ENCODE measurements at regions of chr3 and their contacts with region 1.

Region 1: DNA sequence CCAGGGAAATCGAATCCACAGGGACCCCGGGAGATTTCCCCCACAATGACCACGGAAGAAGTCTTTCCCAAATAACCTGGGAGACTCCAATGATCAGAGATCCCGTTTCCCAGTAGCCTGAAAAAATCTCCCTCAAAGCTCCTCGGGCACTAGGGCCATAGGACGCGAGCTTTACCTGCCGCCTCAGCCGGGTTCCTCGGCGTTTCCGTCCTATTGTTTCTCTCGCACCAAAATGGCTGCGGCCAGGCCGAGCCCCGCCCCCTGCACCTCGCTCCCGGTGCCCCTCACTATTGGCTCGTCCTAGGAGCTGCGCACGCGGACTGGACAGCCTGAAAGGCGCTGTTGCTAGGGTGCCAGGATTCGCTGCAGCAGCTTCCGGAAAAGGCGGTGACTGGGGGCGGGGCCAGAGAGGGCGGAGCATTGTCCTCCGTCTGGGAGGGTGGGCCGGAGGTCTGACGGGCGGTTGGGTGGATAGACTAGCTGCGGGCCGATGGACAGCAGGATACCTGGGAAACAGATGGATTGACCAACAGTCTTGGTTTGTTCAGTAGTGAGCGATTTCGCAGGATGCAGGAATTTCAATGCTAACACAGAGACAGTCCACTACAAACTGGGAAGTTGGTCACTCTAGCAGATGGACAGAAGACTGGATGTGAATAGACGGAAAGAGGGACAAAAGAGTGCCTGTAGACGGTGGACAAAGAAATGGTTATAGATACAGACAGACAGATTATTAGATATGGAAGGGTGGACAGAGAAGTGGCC is at the start of gene IP6K2:
- DNase-seq: peak; percentile 99
- H3K4me3 ChIP-seq: peak within 1 kb of the TSS; percentile 55
- H3K4me3 Mint-ChIP-seq: peak within 1 kb of the TSS; percentile 66
- H3K27ac Mint-ChIP-seq: peak within 1 kb of the TSS; percentile 88
- H3K4me1 ChIP-seq: peaks cover 41% of the 10 kb centered on the region
- H3K4me1 Mint-ChIP-seq: peaks cover 42% of the 10 kb centered on the region
- H3K27me3 ChIP-seq: no peaks in the 10 kb centered on the region
- H3K27me3 Mint-ChIP-seq: no peaks in the 10 kb centered on the region
- CTCF ChIP-seq: no peak
- total RNA-seq, gene IP6K2: 91.7 and 100 TPM in 2 replicates

Region 2: DNA sequence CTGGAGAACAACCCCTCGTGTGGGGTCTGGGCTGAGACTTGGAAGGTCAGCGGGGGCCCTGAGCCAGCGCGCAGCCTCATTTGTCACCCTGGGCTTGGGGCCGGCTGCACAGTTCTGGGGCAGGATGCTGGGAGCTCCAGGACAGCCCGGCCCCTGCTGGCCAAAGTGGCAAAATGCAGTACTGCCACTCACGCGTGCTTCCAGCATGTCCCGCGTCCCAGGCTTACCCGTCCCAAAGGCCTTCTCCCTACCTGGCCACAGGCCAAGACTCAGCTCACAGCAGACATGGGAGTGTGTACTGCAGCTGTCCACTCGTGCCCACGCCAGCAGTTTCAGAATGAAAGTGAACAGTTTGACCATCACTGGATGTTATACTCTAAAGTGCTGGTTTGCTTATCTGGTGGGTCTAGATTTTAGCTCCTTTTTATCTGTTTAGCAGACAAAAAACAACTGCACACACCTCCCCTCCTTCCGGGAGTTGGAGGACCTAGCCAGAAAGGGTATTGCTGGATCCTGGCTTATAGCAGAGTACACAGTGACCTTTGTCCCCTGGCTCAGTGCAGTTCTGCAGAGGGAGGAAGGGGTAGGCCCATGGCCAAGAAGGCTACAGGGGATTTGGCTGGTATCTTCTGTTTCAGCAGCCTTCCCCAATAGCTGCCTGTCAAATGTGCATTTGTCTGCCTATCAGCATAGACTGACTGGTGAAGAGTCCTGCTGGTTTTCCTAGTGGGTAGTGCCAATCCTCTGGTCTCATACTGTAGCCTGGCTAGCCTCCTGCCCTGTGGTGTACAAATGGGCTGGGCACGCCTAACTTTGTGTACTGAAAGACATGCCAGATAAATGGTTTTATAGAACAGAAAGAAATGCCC is 23.0 kb after region 1 on chr3:
- CTCF ChIA-PET with region 1: interaction called, 7 read pairs
- POLR2A ChIA-PET with region 1: interaction called, 13 read pairs
- intact Hi-C with region 1: loop called (anchors 2 kb)
- DNase-seq: peak; percentile 66 to 73
- H3K4me3 ChIP-seq: no peak overlapping the region
- H3K4me3 Mint-ChIP-seq: no peak overlapping the region
- H3K27ac Mint-ChIP-seq: peak overlapping the region; percentile 49
- H3K4me1 ChIP-seq: peaks cover 26% of the 10 kb centered on the region
- H3K4me1 Mint-ChIP-seq: peaks cover 6% of the 10 kb centered on the region
- H3K27me3 ChIP-seq: no peaks in the 10 kb centered on the region
- H3K27me3 Mint-ChIP-seq: no peaks in the 10 kb centered on the region
- CTCF ChIP-seq: peak; percentile 61 to 64

Region 3: GRCh38 chr3:48804930-48805329 is 87.8 kb after region 1 on chr3:
- CTCF ChIA-PET with region 1: no interaction called
- POLR2A ChIA-PET with region 1: no interaction called
- intact Hi-C with region 1: no loop called
- DNase-seq: no peak
- H3K4me3 ChIP-seq: no peak overlapping the region
- H3K4me3 Mint-ChIP-seq: no peak overlapping the region
- H3K27ac Mint-ChIP-seq: no peak overlapping the region
- H3K4me1 ChIP-seq: no peaks in the 10 kb centered on the region; the same call in 1 of the 2 replicates
- H3K4me1 Mint-ChIP-seq: peaks cover 7% of the 10 kb centered on the region
- H3K27me3 ChIP-seq: no peaks in the 10 kb centered on the region
- H3K27me3 Mint-ChIP-seq: no peaks in the 10 kb centered on the region
- CTCF ChIP-seq: no peak